Natural killer cell (primary cell): ENCODE measurements at regions of chr11 and their contacts with region 1.

Region 1: DNA sequence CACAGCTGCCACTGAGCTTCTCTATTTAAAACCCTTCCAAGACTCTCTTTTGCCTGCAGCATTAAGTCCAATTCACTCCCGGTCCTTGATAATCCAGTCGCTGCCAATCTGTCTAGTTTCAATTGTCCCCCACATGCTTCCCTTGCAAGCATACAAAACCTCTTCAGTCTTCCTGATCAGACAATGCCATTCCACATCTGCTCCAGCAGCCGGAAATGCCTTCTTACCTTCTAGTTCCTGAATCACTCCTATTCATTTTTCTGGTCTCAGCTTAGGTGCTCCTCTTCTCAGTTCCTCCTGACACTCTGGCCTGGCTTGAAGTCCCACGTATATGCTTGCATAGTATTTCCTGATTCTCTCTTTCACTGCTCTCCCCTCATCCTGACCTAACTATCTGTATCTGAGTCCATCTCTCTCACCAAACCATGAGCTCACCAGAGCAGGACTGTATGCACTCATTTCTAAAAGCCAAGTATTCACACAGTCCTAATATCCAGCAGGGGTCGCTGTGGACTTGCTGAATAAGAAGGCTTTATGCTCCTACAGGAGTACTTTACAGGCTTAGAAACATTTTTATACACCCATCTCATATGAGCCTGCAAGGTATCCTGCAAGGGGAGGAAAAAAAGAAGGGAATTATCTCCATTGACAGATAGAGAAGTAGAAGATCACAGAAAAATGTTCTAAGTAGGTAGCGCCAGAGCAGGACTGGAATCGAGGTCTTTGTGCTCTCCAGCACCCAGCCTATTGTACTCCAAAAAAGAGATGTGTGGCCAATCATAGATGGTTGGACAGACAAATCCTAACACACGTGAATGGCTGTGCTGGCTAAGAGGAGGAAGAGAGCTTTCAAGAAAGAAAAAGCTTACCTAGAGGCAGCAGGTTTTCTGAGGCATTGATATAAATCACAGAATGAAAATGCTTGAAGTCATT is 19.2 kb downstream of the XRRA1 start:
- DNase-seq: peak; percentile 28 to 90
- ATAC-seq: peak; percentile 81 to 88 (median 82)
- H3K4me3 ChIP-seq: no peak overlapping the region
- H3K4me3 Mint-ChIP-seq: no peak overlapping the region
- H3K27ac ChIP-seq: no peak overlapping the region
- H3K27ac Mint-ChIP-seq: no peak overlapping the region
- H3K4me1 ChIP-seq: peaks cover 4% of the 10 kb centered on the region
- H3K4me1 Mint-ChIP-seq: peaks cover 9% of the 10 kb centered on the region in 2 donors
- H3K27me3 ChIP-seq: no peaks in the 10 kb centered on the region
- H3K27me3 Mint-ChIP-seq: no peaks in the 10 kb centered on the region
- CTCF ChIP-seq: peak; percentile 95

Region 2: GRCh38 chr11:75031771-75032549 is 102.3 kb after region 1 on chr11:
- intact Hi-C with region 1: loop called (anchors 1 kb)
- DNase-seq: peak; percentile 44 to 66
- ATAC-seq: peak in 2 of 3 donors; percentile 38 to 61
- H3K4me3 ChIP-seq: no peak overlapping the region
- H3K4me3 Mint-ChIP-seq: no peak overlapping the region
- H3K27ac ChIP-seq: no peak overlapping the region
- H3K27ac Mint-ChIP-seq: no peak overlapping the region
- H3K4me1 ChIP-seq: no peaks in the 10 kb centered on the region
- H3K4me1 Mint-ChIP-seq: no peaks in the 10 kb centered on the region
- H3K27me3 ChIP-seq: no peaks in the 10 kb centered on the region
- H3K27me3 Mint-ChIP-seq: peaks cover 0 to 2% of the 10 kb centered on the region in 2 donors
- CTCF ChIP-seq: peak; percentile 61

Region 3: GRCh38 chr11:75142714-75143419 is 213.2 kb after region 1 on chr11:
- intact Hi-C with region 1: loop called (anchors 5 kb)
- DNase-seq: peak; percentile 25 to 81
- ATAC-seq: peak; percentile 75 to 84 (median 75)
- H3K4me3 ChIP-seq: no peak overlapping the region
- H3K4me3 Mint-ChIP-seq: peak overlapping the region; percentile 68
- H3K27ac ChIP-seq: no peak overlapping the region
- H3K27ac Mint-ChIP-seq: peak overlapping the region; percentile 6 to 56
- H3K4me1 ChIP-seq: peaks cover 34% of the 10 kb centered on the region
- H3K4me1 Mint-ChIP-seq: peaks cover 19 to 41% of the 10 kb centered on the region in 2 donors
- H3K27me3 ChIP-seq: no peaks in the 10 kb centered on the region
- H3K27me3 Mint-ChIP-seq: peaks cover 5 to 6% of the 10 kb centered on the region in 2 donors
- CTCF ChIP-seq: no peak

Region 4: DNA sequence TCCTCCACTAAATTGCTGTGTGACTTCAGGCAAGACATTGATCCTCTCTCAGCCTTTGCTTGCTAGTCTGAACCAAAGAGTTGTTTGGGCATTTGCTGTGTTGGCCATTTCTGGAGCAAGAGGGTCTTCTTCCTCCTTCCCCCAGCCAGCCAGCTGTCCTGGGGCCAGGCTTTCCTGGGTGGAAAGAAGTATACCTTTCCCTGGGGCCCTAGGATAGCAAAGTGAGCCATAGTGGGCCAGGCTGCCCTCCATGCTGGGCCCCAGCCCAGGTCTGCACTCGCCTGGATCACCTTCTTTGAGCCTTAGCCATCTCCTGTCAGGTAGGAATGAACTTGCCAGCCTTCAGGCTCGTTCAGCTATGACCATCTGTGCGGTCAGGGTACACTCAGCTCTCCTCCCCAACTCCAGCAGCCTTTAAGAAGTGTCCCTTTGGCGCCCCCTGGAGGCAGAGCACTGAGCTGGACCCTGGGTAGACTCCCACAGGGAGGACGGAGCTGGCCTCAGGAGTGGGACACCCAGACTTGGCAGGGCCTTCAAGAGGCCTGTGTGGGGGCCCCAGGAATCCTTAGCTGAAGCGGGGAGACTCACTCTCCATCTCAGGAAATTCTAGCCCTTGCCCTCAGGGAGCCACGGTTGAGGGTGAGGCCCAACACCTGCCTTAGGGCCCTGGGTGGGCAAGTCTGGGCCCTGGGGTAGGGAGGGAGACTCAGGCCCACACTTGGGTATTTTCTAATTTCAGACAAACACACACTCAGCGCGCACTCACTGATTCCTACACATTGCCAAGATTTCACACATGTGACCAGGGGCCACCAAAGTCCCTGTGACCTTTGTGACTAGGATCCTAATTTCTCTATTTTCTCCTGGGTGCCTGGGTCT is 275.2 kb after region 1 on chr11:
- intact Hi-C with region 1: loop called (anchors 1 kb)
- DNase-seq: peak; percentile 77 to 85
- ATAC-seq: peak; percentile 77 to 95 (median 93)
- H3K4me3 ChIP-seq: no peak overlapping the region
- H3K4me3 Mint-ChIP-seq: no peak overlapping the region
- H3K27ac ChIP-seq: no peak overlapping the region
- H3K27ac Mint-ChIP-seq: no peak overlapping the region
- H3K4me1 ChIP-seq: no peaks in the 10 kb centered on the region
- H3K4me1 Mint-ChIP-seq: no peaks in the 10 kb centered on the region
- H3K27me3 ChIP-seq: no peaks in the 10 kb centered on the region
- H3K27me3 Mint-ChIP-seq: peaks cover 0 to 6% of the 10 kb centered on the region in 2 donors
- CTCF ChIP-seq: peak; percentile 84

Region 5: GRCh38 chr11:75248690-75249268 is 319.1 kb after region 1 on chr11:
- intact Hi-C with region 1: loop called (anchors 1 kb)
- DNase-seq: peak; percentile 82 to 94
- ATAC-seq: peak; percentile 94 to 100 (median 99)
- H3K4me3 ChIP-seq: no peak overlapping the region
- H3K4me3 Mint-ChIP-seq: no peak overlapping the region
- H3K27ac ChIP-seq: no peak overlapping the region
- H3K27ac Mint-ChIP-seq: no peak overlapping the region
- H3K4me1 ChIP-seq: peaks cover 3% of the 10 kb centered on the region
- H3K4me1 Mint-ChIP-seq: peaks cover 0 to 7% of the 10 kb centered on the region in 2 donors
- H3K27me3 ChIP-seq: peaks cover 2% of the 10 kb centered on the region
- H3K27me3 Mint-ChIP-seq: peaks cover 14 to 27% of the 10 kb centered on the region in 2 donors
- CTCF ChIP-seq: peak; percentile 100